Left colon (tissue), 2 donors: ENCODE measurements at regions of chr19 and their contacts with region 1.

Region 1: GRCh38 chr19:7562646-7563393 is 27.3 kb downstream of the PNPLA6 start:
- DNase-seq: no peak
- ATAC-seq: no peak

Region 2: DNA sequence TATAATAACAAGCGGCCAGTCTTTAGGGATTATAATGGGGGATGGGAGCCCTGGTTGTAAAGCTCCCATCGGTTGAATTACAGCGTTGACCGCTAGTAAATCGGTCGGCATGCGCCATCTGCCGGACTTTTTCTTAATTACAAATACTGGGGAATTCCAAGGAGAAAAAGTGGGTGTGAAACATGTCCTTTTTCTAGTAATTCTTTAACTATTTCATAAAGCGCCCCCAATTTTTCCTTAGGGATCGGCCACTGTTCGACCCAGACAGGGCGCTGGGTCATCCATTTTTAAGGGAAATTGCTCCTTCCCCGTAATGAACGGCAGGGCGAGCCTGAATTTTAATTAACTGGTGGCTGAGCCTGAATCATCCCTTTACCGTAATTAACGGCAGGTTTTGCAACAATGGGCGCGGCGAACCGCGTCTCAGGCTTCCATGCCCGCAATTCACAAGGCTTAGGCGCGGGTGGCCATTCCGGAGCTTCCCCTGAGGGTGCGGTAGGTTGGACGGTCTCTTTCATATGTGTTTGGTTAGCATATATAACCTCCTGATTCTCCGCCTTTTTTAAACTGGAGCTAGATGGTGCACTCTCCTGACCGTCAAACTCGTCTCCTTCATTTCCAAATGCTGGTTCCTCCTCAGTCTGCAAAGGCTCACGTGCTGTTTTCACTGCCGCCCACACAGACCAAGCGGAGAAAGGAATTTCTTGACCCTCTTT is 237.0 kb after region 1 on chr19:
- intact Hi-C with region 1: loop called in 1 of 2 experiments (anchors 10 kb)
- DNase-seq: peak; percentile 49 to 71
- ATAC-seq: peak; percentile 82

Region 3: DNA sequence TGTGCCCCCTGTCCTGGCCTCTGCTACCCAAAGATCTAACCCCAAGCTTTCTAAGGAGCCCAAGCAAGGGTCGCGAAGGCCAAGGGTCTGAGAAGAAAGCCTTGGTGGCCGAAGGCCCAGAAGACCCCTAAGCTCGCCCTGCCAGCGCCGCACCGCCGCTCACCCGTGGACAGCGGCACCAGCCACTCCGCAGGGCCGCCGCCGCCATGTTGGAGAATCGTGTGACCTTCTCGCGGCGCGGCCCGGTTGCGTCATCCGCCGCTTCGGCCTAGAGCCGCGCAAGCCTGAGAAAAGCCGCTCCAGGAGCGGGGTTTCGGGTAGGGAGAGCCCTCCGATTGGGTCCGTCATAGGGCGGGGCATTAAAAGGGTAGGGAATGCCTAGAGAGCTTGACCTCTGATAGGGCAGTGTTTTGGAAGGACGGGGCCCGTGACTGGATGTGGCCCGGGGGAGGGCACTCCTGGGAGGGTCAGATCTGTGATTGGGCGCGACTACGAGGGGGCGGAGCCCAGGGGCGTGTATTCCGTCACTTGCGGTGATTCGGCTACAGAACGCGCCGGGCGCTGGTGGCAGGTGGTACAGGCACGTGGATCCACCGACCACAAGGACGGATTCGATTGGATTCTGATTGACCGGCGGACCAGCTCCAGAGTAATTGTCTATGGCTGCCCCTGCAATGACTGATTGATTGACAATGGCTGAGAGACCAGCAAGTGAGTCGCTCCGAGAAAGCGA is 380.8 kb after region 1 on chr19 and contains the start of gene TIMM44:
- intact Hi-C with region 1: no loop called
- DNase-seq: peak; percentile 99 to 100
- ATAC-seq: peak; percentile 95
- total RNA-seq, gene TIMM44: 54.1 to 69.1 TPM